PC-9 (cell line): ENCODE measurements at regions of chr16 and their contacts with region 1.

Region 1: DNA sequence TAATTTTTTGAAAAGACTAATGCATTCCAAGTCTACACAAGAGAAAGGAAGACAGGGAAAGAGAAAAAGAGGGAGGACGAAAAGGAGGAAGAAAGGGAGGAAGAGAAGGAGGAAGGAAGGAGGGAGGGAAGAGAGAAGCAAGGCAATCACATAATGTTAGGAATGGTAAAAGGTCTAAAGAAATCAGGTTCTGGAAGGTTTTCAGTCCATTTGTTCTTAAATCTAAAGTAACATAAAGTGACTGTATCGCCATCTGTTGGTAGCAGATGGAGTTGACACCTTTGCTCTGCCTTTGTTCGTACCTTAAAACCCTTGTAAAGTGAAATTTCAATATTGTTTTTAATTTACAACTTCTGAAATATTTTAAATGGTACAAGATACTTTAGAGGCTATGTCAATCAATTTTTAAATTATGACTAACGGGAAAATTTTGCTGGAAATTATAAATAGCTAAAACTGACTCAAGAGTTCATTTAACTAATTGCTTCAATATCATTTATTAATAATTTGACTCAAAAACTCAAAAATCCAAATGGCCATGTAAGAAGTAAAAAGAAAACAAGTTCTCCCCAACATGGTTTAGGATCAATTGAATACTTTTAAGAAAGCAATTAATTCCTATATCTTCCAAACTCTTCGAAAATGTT is 20.4 kb upstream of the CDYL2 start:
- DNase-seq: no peak
- H3K4me3 ChIP-seq: no peak overlapping the region
- H3K27ac ChIP-seq: no peak overlapping the region
- H3K4me1 ChIP-seq: no peaks in the 10 kb centered on the region
- H3K27me3 ChIP-seq: peaks cover 14% of the 10 kb centered on the region
- CTCF ChIP-seq: peak; percentile 75

Region 2: DNA sequence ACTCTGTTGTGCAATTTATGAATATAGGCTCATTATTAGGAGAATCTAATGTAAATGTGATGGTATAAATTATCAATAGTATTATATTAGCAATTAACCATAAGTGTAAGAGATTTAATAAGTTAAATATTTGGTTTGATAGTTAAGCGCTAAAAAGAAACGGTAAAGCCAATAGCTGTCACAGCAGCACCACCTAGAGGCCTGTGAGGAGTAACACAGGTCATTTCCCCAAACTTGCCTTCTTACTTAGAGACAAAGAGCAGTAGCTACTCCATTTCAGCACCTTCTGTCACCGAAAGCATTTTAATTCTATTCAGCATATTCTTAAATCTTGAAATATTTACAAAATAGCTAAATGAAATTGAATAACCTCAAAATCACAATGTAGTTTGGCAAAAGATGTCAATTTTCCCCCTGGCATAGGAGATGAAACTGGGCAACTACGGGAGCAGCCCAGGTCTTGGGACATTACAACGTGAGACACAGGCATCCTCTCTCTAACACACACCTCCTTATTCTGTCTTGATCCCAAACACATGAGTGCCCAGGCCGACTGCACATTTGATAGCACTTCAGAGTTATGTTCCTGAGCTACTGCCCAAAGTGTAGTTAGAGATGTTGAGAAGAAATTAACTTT is 298.3 kb before region 1 on chr16:
- CTCF ChIA-PET with region 1: no interaction called
- POLR2A ChIA-PET with region 1: no interaction called
- intact Hi-C with region 1: loop called (anchors 10 kb)
- DNase-seq: peak in 1 of 2 experiments; percentile 14
- H3K4me3 ChIP-seq: no peak overlapping the region
- H3K27ac ChIP-seq: no peak overlapping the region
- H3K4me1 ChIP-seq: no peaks in the 10 kb centered on the region
- H3K27me3 ChIP-seq: no peaks in the 10 kb centered on the region; the same call in 1 of the 2 replicates
- CTCF ChIP-seq: peak; percentile 85

Region 3: DNA sequence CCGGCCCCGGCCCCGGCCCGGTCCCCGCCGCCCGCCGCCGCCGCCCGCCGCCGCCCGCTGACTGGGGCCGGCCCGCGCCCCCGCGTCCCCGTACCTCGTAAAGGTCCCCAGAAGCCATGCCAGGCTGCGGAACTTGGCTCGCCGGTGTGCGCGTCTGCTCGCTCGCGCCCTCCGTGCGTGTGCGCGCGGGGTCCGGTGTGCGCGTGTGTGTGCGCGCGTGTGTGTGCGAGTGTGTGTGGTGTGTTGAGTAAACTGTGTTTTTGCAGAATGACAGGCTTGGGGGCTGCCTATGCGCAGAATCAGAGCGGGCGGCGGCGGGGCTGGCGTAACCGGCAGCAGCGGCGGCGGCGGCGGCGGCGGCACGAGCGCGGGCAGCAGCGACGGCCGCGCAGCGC is 20.8 kb before region 1 on chr16:
- CTCF ChIA-PET with region 1: no interaction called
- POLR2A ChIA-PET with region 1: no interaction called
- intact Hi-C with region 1: no loop called
- DNase-seq: no peak
- H3K4me3 ChIP-seq: no peak overlapping the region
- H3K27ac ChIP-seq: no peak overlapping the region
- H3K4me1 ChIP-seq: no peaks in the 10 kb centered on the region
- H3K27me3 ChIP-seq: no peaks in the 10 kb centered on the region
- CTCF ChIP-seq: no peak